ENCODE measurements at regions of chr6 and their contacts with region 1.

Region 1: DNA sequence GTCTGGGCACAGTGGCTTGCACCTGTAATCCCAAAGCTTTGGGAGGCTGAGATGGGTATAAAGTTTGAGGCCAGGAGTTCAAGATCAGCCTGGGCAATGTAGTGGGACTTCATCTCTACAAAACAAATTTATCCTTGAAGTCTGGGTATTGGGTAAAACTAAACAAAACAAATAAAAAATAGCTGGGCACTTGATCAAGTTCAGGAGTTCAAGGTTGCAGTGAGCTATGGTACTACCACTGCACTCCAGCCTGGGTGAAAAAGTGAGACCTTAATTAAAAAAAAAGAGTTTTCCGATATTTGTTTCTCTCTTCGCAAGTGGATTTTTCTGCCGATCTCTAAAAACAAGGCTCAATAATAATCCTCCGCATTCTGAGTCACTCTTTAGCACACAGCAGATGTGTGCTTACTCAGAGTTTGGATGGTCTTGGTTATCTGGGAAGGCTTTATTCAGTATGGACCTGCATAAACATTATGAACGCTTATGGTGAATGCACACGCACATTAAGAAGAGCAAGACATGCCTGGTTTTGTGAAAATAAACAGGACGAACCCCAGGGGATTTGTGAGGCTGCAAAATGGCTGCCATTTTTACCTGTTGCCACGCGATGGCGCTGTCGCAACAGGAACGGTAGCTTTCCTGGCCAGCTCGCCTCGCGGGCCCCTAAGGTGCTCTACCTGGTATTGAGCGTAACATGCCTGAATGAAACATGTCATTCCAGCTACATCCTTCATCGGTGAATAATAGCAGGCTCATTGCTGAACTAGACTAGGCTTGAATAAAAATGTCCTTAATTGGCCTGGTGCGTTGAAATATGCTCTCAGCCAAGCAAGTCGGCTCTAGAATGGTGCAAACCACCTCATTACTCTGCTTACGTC is 6.0 kb downstream of the OPN5 start:
- DNase-seq: peak; percentile 59
- ATAC-seq: peak; percentile 97
- H3K4me3 ChIP-seq: no peak overlapping the region
- H3K27ac ChIP-seq: no peak overlapping the region
- H3K4me1 ChIP-seq: peaks cover 12% of the 10 kb centered on the region
- H3K27me3 ChIP-seq: peaks cover 0 to 4% of the 10 kb centered on the region in 2 experiments; a peak in 2 of 5 replicates
- CTCF ChIP-seq: peak; percentile 99
- EP300 ChIP-seq: no peak
- POLR2A ChIP-seq: no peak
- RAD21 ChIP-seq: peak; percentile 96

Region 2: DNA sequence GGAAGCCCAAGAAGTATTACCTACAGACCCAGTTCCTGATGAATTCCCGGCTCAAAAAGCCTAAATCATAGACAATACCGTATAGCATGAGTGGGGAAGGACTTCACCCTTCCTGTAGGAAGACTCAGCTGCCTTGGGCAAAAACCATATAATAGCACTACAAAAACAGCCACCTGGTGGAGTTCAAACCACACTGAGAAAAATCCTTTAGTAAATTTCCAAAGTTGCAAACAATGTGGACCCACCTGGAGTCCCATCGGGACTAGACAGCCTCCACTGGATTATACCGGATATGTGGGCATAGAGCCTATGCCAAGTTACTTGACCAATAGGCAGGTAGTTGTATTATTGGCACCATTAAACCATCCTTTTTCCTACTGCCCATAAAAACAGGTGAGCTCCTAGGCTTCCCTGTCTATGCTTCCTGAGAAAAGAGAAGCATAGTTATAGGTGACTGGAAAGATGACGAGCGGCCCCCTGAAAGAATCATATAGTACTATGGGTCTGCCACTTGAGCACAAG is 141.2 kb before region 1 on chr6:
- CTCF ChIA-PET with region 1: no interaction called
- POLR2A ChIA-PET with region 1: no interaction called
- in situ Hi-C with region 1: no loop called
- intact Hi-C with region 1: no loop called
- DNase-seq: no peak
- ATAC-seq: no peak
- H3K4me3 ChIP-seq: no peak overlapping the region
- H3K27ac ChIP-seq: no peak overlapping the region
- H3K4me1 ChIP-seq: no peaks in the 10 kb centered on the region
- H3K27me3 ChIP-seq: peaks cover 0 to 15% of the 10 kb centered on the region in 2 experiments; a peak in 2 of 5 replicates
- CTCF ChIP-seq: no peak
- EP300 ChIP-seq: no peak
- POLR2A ChIP-seq: no peak
- RAD21 ChIP-seq: no peak

Region 3: DNA sequence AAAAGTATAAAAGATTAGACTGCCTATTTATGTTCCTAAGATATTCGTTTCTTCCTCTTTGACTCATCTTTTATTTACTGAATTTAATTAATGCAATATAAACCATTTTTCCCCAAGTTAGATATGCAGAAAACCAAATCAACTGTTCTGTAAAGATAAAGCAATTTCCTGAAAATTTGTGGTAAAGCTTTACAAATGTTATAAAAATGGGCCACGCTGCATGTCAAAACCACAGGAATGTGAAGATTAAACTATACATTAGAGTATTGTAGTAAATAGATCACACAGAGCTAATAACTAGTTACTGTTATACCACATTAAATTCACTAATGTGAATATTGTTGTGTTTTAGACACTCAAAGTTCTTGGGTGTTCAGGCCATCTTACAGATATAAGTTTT is 77.3 kb after region 1 on chr6:
- CTCF ChIA-PET with region 1: no interaction called
- POLR2A ChIA-PET with region 1: no interaction called
- in situ Hi-C with region 1: no loop called
- intact Hi-C with region 1: no loop called
- DNase-seq: no peak
- ATAC-seq: no peak
- H3K4me3 ChIP-seq: no peak overlapping the region
- H3K27ac ChIP-seq: no peak overlapping the region
- H3K4me1 ChIP-seq: no peaks in the 10 kb centered on the region
- H3K27me3 ChIP-seq: no peaks in the 10 kb centered on the region
- CTCF ChIP-seq: no peak
- EP300 ChIP-seq: no peak
- POLR2A ChIP-seq: no peak
- RAD21 ChIP-seq: no peak

Region 4: GRCh38 chr6:48151142-48151541 is 363.3 kb after region 1 on chr6:
- CTCF ChIA-PET with region 1: interaction called, 3 read pairs
- POLR2A ChIA-PET with region 1: no interaction called
- in situ Hi-C with region 1: no loop called
- intact Hi-C with region 1: loop called (anchors 10 kb)
- DNase-seq: no peak
- ATAC-seq: no peak
- H3K4me3 ChIP-seq: no peak overlapping the region
- H3K27ac ChIP-seq: no peak overlapping the region
- H3K4me1 ChIP-seq: no peaks in the 10 kb centered on the region
- H3K27me3 ChIP-seq: no peaks in the 10 kb centered on the region
- CTCF ChIP-seq: no peak
- EP300 ChIP-seq: no peak
- POLR2A ChIP-seq: no peak
- RAD21 ChIP-seq: no peak

Region 5: DNA sequence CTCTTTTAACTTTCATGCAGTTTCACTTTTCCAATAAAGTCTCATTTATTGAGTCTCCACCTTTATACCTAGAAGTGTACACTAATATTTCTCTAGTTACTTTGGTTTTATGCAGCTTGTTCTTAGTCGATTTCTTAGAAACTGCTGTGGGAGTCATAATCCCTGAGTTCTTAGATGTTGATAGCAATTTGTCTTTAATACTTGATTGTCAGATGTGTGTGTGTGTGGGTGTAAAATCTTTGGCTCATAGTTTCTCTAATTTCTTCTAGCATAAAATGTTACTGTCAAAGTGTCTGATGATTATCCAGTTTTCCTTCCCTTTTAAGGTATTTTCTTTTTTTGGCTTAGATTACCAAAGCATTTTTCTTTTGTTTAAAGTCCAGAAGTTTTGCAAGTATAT is 797.0 kb after region 1 on chr6:
- CTCF ChIA-PET with region 1: no interaction called
- POLR2A ChIA-PET with region 1: no interaction called
- in situ Hi-C with region 1: no loop called
- intact Hi-C with region 1: loop called (anchors 10 kb)
- DNase-seq: no peak
- ATAC-seq: no peak
- H3K4me3 ChIP-seq: no peak overlapping the region
- H3K27ac ChIP-seq: no peak overlapping the region
- H3K4me1 ChIP-seq: no peaks in the 10 kb centered on the region
- H3K27me3 ChIP-seq: no peaks in the 10 kb centered on the region; a peak in 1 of 5 replicates
- CTCF ChIP-seq: no peak
- EP300 ChIP-seq: no peak
- POLR2A ChIP-seq: no peak
- RAD21 ChIP-seq: no peak

Region 6: GRCh38 chr6:49409951-49410542 is 1622.2 kb after region 1 on chr6:
- CTCF ChIA-PET with region 1: interaction called, 9 read pairs
- POLR2A ChIA-PET with region 1: no interaction called
- in situ Hi-C with region 1: no loop called
- intact Hi-C with region 1: loop called (anchors 1 kb)
- DNase-seq: peak; percentile 59
- ATAC-seq: peak; percentile 97
- H3K4me3 ChIP-seq: no peak overlapping the region
- H3K27ac ChIP-seq: no peak overlapping the region
- H3K4me1 ChIP-seq: no peaks in the 10 kb centered on the region
- H3K27me3 ChIP-seq: no peaks in the 10 kb centered on the region
- CTCF ChIP-seq: peak; percentile 85
- EP300 ChIP-seq: no peak
- POLR2A ChIP-seq: no peak
- RAD21 ChIP-seq: no peak